HCT116 (cell line): ENCODE measurements at regions of chr3 and their contacts with region 1.

Region 1: DNA sequence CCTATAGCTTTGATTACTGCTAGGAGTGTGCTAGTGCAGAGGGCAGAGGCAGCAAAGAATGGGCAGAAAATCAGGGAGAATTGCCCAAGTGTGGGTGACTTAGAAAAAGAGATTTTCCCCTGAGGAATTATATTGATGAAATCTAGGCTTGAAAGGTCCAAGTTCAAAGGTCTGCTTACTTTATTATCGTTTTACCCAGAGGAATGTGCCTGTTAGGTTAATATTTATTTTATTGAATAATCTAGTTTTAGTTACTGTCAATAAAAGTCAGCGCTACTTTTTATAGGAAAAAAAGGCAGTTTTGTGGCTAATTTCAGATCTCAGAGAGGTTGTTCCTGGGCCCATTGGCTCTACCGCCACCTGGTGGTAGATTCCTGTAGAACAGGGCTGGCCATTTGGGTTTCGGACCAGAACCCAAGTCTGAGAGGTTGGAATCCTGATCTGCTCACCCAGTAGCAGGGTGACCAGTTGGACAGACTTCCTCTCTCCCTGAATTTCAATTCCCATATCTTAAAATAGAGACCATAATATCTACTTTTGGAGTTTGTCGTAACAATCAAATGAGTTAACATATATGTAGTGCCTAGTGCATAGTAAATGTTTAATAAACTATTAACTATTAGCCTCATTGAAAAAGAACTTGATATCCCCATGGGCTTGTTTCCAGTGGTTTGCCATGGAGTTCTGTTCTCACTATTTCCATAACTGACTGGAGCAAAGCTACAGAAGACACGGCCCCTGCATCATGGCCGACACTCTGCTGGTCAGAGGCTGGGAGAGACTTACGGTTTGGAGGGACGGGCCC is 62.7 kb upstream of the ZNF148 start:
- DNase-seq: peak; percentile 29
- ATAC-seq: peak; percentile 81
- H3K4me3 ChIP-seq: no peak overlapping the region
- H3K27ac ChIP-seq: no peak overlapping the region
- H3K4me1 ChIP-seq: no peaks in the 10 kb centered on the region
- H3K27me3 ChIP-seq: no peaks in the 10 kb centered on the region
- CTCF ChIP-seq: peak; percentile 83 to 97 (median 96)
- POLR2A ChIP-seq: no peak
- RAD21 ChIP-seq: peak; percentile 87

Region 2: DNA sequence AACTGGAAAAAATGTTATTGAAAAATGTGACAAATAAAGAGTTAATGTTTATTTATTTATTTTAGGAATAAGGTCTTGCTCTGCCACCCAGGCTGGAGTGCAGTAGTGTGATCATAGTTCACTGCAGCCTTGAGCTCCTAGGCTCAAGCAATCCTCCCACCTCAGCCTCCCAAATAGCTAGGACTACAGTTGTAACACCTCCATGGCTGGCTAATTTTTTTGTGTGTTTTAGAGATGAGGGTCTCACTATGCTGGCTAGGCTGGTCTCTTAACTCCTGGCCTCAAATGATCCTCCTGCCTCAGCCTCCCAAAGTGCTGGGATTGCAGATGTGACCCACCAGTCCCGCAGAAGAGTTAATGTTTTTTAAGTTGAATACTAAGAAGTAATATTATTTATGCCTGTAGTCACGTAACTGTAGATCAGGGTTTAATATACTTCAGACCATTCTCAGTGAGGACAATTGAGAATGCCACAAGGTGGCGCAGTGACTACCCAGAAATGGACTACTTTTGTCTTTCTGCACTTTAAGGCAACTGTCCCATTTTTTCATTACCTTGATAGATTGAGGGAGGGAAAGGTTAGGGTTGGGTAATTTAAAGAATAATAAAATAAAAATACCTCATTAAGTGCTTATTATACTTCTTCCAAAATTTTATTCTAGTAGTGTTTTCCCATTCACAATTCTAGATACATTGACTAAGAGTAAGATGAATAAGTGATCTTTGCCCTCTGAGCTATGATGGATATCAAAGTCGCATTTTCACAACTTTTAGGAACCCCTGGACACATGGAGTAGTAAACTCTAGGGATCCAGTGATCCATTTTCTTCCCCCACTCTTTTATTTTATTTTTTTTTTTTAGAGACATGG is 509.3 kb before region 1 on chr3:
- CTCF ChIA-PET with region 1: no interaction called
- POLR2A ChIA-PET with region 1: no interaction called
- RAD21 ChIA-PET with region 1: no interaction called
- intact Hi-C with region 1: loop called (anchors 1 kb)
- DNase-seq: peak; percentile 60
- ATAC-seq: peak; percentile 91
- H3K4me3 ChIP-seq: no peak overlapping the region
- H3K27ac ChIP-seq: no peak overlapping the region
- H3K4me1 ChIP-seq: peaks cover 0 to 3% of the 10 kb centered on the region in 2 experiments; a peak in 1 of 4 replicates
- H3K27me3 ChIP-seq: no peaks in the 10 kb centered on the region
- CTCF ChIP-seq: peak; percentile 73 to 84 (median 82); a peak in 5 of 6 replicates
- POLR2A ChIP-seq: no peak
- RAD21 ChIP-seq: peak; percentile 83

Region 3: DNA sequence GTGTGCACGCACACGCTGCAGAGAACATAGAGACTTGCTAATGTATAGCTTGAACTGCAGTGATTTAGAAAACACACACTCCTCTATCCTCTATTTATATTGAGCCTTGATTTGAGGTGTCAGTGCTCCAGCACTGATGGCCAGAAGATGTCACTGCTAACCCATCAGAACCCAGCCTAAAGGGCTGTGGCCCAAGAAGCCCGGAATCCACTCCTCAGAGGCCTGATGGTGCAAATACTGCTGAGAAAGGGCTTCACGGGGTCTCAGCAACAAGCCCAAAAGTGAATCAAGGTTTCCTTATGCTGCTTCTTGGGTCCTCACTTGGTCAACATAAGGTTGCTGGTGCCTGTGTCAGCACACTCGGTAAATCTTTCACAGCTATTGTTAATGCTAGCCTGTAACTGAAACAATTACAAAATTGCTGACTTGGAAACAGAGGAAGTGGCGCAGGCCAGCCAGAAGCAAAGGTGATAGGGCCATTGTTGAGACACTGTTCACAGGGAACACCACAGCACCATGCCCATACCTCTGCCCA is 442.3 kb before region 1 on chr3:
- CTCF ChIA-PET with region 1: interaction called, 4 read pairs
- POLR2A ChIA-PET with region 1: no interaction called
- RAD21 ChIA-PET with region 1: no interaction called
- intact Hi-C with region 1: loop called (anchors 1 kb)
- DNase-seq: peak; percentile 34
- ATAC-seq: peak; percentile 98
- H3K4me3 ChIP-seq: no peak overlapping the region
- H3K27ac ChIP-seq: no peak overlapping the region
- H3K4me1 ChIP-seq: no peaks in the 10 kb centered on the region
- H3K27me3 ChIP-seq: no peaks in the 10 kb centered on the region
- CTCF ChIP-seq: peak; percentile 65 to 84 (median 79)
- POLR2A ChIP-seq: no peak
- RAD21 ChIP-seq: peak; percentile 94

Region 4: GRCh38 chr3:125150525-125151441 is 287.1 kb before region 1 on chr3:
- CTCF ChIA-PET with region 1: interaction called, 6 read pairs
- POLR2A ChIA-PET with region 1: no interaction called
- RAD21 ChIA-PET with region 1: no interaction called
- intact Hi-C with region 1: loop called (anchors 1 kb)
- DNase-seq: peak; percentile 66
- ATAC-seq: peak; percentile 97
- H3K4me3 ChIP-seq: no peak overlapping the region
- H3K27ac ChIP-seq: no peak overlapping the region
- H3K4me1 ChIP-seq: peaks cover 0 to 7% of the 10 kb centered on the region in 2 experiments; a peak in 1 of 4 replicates
- H3K27me3 ChIP-seq: no peaks in the 10 kb centered on the region
- CTCF ChIP-seq: peak; percentile 62 to 90 (median 83)
- POLR2A ChIP-seq: no peak
- RAD21 ChIP-seq: peak; percentile 69

Region 5: GRCh38 chr3:125203731-125204130 is 234.1 kb before region 1 on chr3:
- CTCF ChIA-PET with region 1: no interaction called
- POLR2A ChIA-PET with region 1: no interaction called
- RAD21 ChIA-PET with region 1: no interaction called
- intact Hi-C with region 1: no loop called
- DNase-seq: no peak
- ATAC-seq: no peak
- H3K4me3 ChIP-seq: no peak overlapping the region
- H3K27ac ChIP-seq: no peak overlapping the region
- H3K4me1 ChIP-seq: peaks cover 0 to 8% of the 10 kb centered on the region in 2 experiments; a peak in 1 of 4 replicates
- H3K27me3 ChIP-seq: no peaks in the 10 kb centered on the region
- CTCF ChIP-seq: no peak
- POLR2A ChIP-seq: no peak
- RAD21 ChIP-seq: no peak